ENCODE measurements at regions of chr16 and their contacts with region 1.

Region 1: DNA sequence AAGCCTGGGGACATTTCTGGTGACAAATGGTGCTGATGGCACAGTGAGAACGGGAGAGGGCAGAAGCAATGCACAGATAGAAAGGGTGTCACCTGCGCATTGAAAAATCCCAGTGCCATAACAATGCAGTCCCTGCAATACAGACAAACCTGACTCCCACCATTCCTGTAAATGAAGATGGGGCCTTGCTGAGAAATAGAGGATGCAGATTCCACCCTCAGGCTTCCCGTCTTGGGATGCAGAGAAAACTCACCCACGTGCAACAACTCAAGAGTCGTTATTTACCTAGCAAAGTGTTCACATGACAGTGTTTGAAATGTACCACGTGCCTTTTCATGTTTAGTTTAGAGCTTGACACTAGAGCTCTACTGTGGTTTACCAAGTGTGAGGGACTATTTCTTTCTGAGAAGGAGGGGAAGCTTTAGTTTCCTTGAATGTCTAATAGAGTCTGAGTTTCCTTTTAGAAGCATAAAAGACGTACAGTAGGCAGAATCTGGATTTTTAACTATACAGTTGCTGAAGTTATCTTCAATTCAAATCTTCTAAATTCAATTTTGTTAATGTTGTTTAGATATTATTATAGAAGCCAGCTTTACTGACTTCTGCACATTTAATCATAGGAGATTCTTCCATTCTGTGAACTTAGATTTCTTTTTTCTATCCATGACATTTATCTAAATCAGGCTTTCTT is 35.6 kb downstream of the WWOX start:
- DNase-seq: peak in 1 of 2 experiments; percentile 25
- H3K4me3 ChIP-seq: no peak overlapping the region
- H3K4me3 Mint-ChIP-seq: peak overlapping the region; percentile 31
- H3K27ac Mint-ChIP-seq: peak overlapping the region; percentile 21
- H3K4me1 ChIP-seq: peaks cover 31% of the 10 kb centered on the region
- H3K4me1 Mint-ChIP-seq: peaks cover 33% of the 10 kb centered on the region
- H3K27me3 ChIP-seq: no peaks in the 10 kb centered on the region
- H3K27me3 Mint-ChIP-seq: no peaks in the 10 kb centered on the region
- CTCF ChIP-seq: no peak

Region 2: DNA sequence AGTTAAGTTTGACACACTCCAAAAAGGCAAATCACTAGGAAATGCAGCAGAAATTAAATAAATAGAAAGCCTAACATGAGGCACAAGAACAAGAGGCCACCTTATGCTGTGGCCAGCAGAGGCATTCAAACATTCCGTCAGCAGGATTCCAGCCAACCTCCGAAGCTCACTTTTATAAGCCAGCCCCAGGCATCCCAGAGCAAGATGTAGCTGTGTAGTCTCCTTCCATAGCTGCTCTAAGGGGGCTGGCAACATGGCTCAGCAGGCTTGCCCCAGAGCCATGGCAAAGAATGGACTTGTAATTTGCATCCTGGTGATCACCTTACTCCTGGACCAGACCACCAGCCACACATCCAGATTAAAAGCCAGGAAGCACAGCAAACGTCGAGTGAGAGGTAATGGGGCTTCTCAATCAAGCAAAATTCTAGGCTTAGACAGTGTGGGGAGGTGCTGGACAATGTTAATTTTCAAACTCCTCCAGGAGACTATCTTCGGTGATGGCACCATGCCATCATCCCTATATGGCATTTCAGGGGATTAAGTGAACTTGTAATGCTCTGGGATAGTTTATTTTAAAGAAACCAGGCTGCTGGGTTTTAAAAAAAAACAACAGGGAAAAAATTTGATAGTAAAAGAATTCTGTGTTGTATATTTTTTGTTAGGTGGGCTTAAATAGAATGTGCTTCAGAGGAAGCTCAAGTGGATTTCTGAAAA is 112.6 kb before region 1 on chr16 and contains the start of gene CLEC3A:
- CTCF ChIA-PET with region 1: no interaction called
- POLR2A ChIA-PET with region 1: no interaction called
- intact Hi-C with region 1: no loop called
- DNase-seq: no peak
- H3K4me3 ChIP-seq: no peak within 1 kb of the TSS
- H3K4me3 Mint-ChIP-seq: no peak within 1 kb of the TSS
- H3K27ac Mint-ChIP-seq: no peak within 1 kb of the TSS
- H3K4me1 ChIP-seq: no peaks in the 10 kb centered on the region
- H3K4me1 Mint-ChIP-seq: no peaks in the 10 kb centered on the region
- H3K27me3 ChIP-seq: no peaks in the 10 kb centered on the region; the same call in 1 of the 2 replicates
- H3K27me3 Mint-ChIP-seq: peaks cover 18% of the 10 kb centered on the region
- CTCF ChIP-seq: no peak
- total RNA-seq, gene CLEC3A: 1.1 TPM in 2 replicates

Region 3: GRCh38 chr16:78170436-78170933 is 35.4 kb after region 1 on chr16:
- CTCF ChIA-PET with region 1: no interaction called
- POLR2A ChIA-PET with region 1: no interaction called
- intact Hi-C with region 1: no loop called
- DNase-seq: no peak
- H3K4me3 ChIP-seq: no peak overlapping the region
- H3K4me3 Mint-ChIP-seq: no peak overlapping the region
- H3K27ac Mint-ChIP-seq: no peak overlapping the region
- H3K4me1 ChIP-seq: no peaks in the 10 kb centered on the region
- H3K4me1 Mint-ChIP-seq: no peaks in the 10 kb centered on the region
- H3K27me3 ChIP-seq: no peaks in the 10 kb centered on the region
- H3K27me3 Mint-ChIP-seq: no peaks in the 10 kb centered on the region
- CTCF ChIP-seq: no peak

Region 4: GRCh38 chr16:78184238-78185183 is 49.4 kb after region 1 on chr16:
- CTCF ChIA-PET with region 1: no interaction called
- POLR2A ChIA-PET with region 1: no interaction called
- intact Hi-C with region 1: loop called (anchors 5 kb)
- DNase-seq: peak in 1 of 2 experiments; percentile 15
- H3K4me3 ChIP-seq: no peak overlapping the region
- H3K4me3 Mint-ChIP-seq: no peak overlapping the region
- H3K27ac Mint-ChIP-seq: no peak overlapping the region
- H3K4me1 ChIP-seq: peaks cover 10% of the 10 kb centered on the region; the same call in 1 of the 2 replicates
- H3K4me1 Mint-ChIP-seq: peaks cover 12% of the 10 kb centered on the region
- H3K27me3 ChIP-seq: no peaks in the 10 kb centered on the region
- H3K27me3 Mint-ChIP-seq: no peaks in the 10 kb centered on the region
- CTCF ChIP-seq: no peak

Region 5: DNA sequence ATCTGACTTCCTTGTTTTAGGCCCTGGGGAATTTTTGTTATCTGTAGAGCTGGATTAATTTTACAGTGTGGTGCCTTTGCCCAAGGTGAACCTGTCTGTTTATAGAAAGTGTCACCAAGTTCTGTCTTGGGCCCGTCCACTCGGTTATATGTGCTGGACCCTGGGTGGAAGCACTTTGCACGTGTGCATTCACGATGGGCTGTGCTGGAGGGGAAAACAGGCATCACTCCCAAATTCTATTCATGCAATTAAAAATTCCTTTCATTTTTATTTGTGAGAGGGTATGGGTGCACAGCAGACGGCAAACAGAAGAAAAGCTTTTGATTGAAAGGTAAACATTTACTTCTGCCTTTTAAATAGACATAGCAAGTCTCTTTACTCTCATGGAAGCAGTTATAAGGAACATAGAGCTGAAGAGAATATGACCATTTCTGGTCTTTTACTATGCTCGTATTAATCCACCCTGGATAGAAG is 65.6 kb after region 1 on chr16:
- CTCF ChIA-PET with region 1: no interaction called
- POLR2A ChIA-PET with region 1: no interaction called
- intact Hi-C with region 1: loop called (anchors 1 kb)
- DNase-seq: peak; percentile 44 to 51
- H3K4me3 ChIP-seq: no peak overlapping the region
- H3K4me3 Mint-ChIP-seq: peak overlapping the region; percentile 55
- H3K27ac Mint-ChIP-seq: peak overlapping the region; percentile 97
- H3K4me1 ChIP-seq: peaks cover 40% of the 10 kb centered on the region
- H3K4me1 Mint-ChIP-seq: peaks cover 47% of the 10 kb centered on the region
- H3K27me3 ChIP-seq: no peaks in the 10 kb centered on the region
- H3K27me3 Mint-ChIP-seq: no peaks in the 10 kb centered on the region
- CTCF ChIP-seq: no peak

Region 6: DNA sequence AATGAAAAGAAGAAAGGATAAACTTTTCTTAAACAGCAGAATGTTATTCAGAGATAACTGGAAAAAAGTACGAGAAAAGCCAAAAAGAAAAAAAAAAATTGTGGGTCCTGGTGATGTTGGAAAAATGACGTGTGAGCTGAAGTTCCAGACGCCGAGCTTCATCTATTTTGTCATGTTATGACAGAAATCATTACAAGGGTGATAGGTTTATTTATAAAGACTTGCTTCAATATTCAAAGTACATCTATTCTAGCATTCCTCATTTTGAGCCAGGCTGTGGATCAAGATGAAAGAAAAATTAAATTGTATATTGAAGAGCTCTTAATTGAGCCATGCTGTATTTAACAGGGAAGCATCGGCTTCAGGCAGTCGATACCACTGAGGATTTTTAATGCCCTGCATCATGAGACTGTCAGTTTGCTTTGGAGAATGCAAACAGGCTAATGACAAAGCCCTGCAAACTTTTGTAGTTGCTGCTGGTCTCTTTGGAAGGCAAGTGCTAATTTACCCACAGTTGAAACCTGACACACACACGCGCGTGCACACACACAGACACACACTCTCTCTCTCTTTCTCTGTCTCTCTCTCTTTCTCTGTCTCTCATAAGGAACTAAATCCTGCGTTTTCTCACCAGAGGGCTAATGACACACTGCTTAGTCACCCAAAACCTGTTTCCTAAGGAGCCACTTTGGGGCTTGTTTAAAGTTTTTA is 75.0 kb after region 1 on chr16:
- CTCF ChIA-PET with region 1: interaction called, 6 read pairs
- POLR2A ChIA-PET with region 1: interaction called, 6 read pairs
- intact Hi-C with region 1: loop called (anchors 5 kb)
- DNase-seq: peak in 1 of 2 experiments; percentile 20
- H3K4me3 ChIP-seq: no peak overlapping the region
- H3K4me3 Mint-ChIP-seq: no peak overlapping the region
- H3K27ac Mint-ChIP-seq: peak overlapping the region; percentile 92
- H3K4me1 ChIP-seq: peaks cover 45% of the 10 kb centered on the region
- H3K4me1 Mint-ChIP-seq: peaks cover 49% of the 10 kb centered on the region
- H3K27me3 ChIP-seq: no peaks in the 10 kb centered on the region
- H3K27me3 Mint-ChIP-seq: no peaks in the 10 kb centered on the region
- CTCF ChIP-seq: no peak

Region 7: GRCh38 chr16:78227855-78228254 is 92.8 kb after region 1 on chr16:
- CTCF ChIA-PET with region 1: no interaction called
- POLR2A ChIA-PET with region 1: no interaction called
- intact Hi-C with region 1: loop called (anchors 1 kb)
- DNase-seq: peak; percentile 53 to 56
- H3K4me3 ChIP-seq: no peak overlapping the region
- H3K4me3 Mint-ChIP-seq: no peak overlapping the region
- H3K27ac Mint-ChIP-seq: peak overlapping the region; percentile 28
- H3K4me1 ChIP-seq: peaks cover 17% of the 10 kb centered on the region
- H3K4me1 Mint-ChIP-seq: peaks cover 18% of the 10 kb centered on the region
- H3K27me3 ChIP-seq: no peaks in the 10 kb centered on the region
- H3K27me3 Mint-ChIP-seq: no peaks in the 10 kb centered on the region
- CTCF ChIP-seq: peak; percentile 23 to 35

Region 8: DNA sequence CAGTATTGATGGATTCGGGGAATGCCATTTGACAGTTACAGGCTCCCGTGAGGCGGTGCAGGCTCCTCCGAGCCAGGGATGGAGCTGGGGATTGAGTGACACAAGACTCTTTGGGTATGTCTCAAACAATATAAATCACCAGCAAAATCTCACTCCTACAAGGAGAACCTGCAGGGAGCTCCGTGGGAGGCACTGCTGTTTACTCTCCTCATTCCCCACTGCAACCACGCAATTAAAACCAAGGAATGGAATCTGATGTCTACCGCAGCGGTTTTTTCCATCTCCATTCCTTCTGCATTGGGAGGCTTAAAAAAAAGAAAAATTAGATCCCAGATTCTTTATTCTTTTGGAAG is 122.3 kb after region 1 on chr16:
- CTCF ChIA-PET with region 1: no interaction called
- POLR2A ChIA-PET with region 1: no interaction called
- intact Hi-C with region 1: loop called (anchors 1 kb)
- DNase-seq: peak in 1 of 2 experiments; percentile 37
- H3K4me3 ChIP-seq: no peak overlapping the region
- H3K4me3 Mint-ChIP-seq: peak overlapping the region; percentile 53
- H3K27ac Mint-ChIP-seq: peak overlapping the region; percentile 71
- H3K4me1 ChIP-seq: peaks cover 44% of the 10 kb centered on the region
- H3K4me1 Mint-ChIP-seq: peaks cover 29% of the 10 kb centered on the region
- H3K27me3 ChIP-seq: no peaks in the 10 kb centered on the region
- H3K27me3 Mint-ChIP-seq: no peaks in the 10 kb centered on the region
- CTCF ChIP-seq: no peak

Measured in Caco-2 (cell line).